T-cell (primary cell): ENCODE measurements at regions of chr15 and their contacts with region 1.

Region 1: GRCh38 chr15:31365655-31366127 is 39.1 kb downstream of the KLF13 start:
- DNase-seq: peak; percentile 58 to 94 (median 79)
- ATAC-seq: peak; percentile 52 to 57 (median 54)
- H3K4me3 ChIP-seq: peak overlapping the region in 1 of 2 donors; percentile 25
- H3K4me3 Mint-ChIP-seq: peak overlapping the region; percentile 59 to 94 (median 74)
- H3K27ac ChIP-seq: peak overlapping the region; percentile 99
- H3K27ac Mint-ChIP-seq: peak overlapping the region; percentile 96
- H3K4me1 ChIP-seq: peaks cover 68 to 98% of the 10 kb centered on the region in 2 experiments
- H3K4me1 Mint-ChIP-seq: peaks cover 97 to 100% (median 99%) of the 10 kb centered on the region in 3 donors
- H3K27me3 ChIP-seq: no peaks in the 10 kb centered on the region
- H3K27me3 Mint-ChIP-seq: no peaks in the 10 kb centered on the region

Region 2: DNA sequence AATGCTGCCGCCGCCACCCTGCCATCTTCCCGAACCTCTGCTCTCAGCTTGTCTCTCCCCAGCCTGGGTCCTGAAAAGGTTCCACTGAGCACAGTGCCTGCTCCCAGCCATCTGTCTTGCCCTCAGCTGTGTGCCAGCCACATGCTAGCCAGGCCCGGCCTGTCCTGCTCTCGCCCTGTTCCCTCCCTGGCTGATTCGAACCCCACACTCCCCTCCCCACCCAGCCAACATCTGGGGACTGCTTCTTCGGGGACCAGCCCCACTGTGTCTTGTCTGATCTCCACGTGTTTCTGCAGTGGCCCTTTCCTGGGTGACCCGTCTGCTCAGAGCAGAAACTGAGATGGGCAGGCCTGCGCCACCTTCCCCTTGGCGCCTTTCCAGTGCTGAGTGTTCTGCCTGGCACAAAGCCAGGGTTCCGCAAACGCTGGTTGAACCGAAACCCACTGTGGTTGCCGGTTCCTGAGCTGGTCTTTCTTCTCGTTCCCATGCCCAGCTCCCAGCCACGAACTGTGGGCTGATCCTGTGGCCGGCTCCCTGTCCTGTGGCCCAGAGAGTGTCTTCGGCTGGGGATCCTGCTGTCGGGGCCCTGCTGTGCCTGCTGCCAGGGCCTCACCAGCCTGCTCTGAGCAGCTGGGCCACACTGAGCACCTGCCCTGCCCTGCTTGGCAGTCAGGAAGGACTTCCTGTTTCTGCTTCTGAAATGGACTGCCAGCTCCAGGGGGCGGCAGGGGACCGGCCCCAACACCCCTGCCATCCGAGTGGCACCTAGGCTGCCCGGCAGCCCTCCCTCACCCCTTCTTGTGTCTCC is 101.7 kb before region 1 on chr15:
- CTCF ChIA-PET with region 1: interaction called in 1 of 2 experiments, 5 read pairs
- POLR2A ChIA-PET with region 1: interaction called, 3 to 12 read pairs
- DNase-seq: peak; percentile 42 to 87 (median 67)
- ATAC-seq: peak; percentile 56 to 71 (median 67)
- H3K4me3 ChIP-seq: no peak overlapping the region
- H3K4me3 Mint-ChIP-seq: peak overlapping the region; percentile 59 to 75 (median 63)
- H3K27ac ChIP-seq: peak overlapping the region; percentile 80
- H3K27ac Mint-ChIP-seq: peak overlapping the region; percentile 96 to 97
- H3K4me1 ChIP-seq: peaks cover 64 to 80% of the 10 kb centered on the region in 2 experiments
- H3K4me1 Mint-ChIP-seq: peaks cover 80 to 95% (median 85%) of the 10 kb centered on the region in 3 donors
- H3K27me3 ChIP-seq: no peaks in the 10 kb centered on the region
- H3K27me3 Mint-ChIP-seq: no peaks in the 10 kb centered on the region

Region 3: DNA sequence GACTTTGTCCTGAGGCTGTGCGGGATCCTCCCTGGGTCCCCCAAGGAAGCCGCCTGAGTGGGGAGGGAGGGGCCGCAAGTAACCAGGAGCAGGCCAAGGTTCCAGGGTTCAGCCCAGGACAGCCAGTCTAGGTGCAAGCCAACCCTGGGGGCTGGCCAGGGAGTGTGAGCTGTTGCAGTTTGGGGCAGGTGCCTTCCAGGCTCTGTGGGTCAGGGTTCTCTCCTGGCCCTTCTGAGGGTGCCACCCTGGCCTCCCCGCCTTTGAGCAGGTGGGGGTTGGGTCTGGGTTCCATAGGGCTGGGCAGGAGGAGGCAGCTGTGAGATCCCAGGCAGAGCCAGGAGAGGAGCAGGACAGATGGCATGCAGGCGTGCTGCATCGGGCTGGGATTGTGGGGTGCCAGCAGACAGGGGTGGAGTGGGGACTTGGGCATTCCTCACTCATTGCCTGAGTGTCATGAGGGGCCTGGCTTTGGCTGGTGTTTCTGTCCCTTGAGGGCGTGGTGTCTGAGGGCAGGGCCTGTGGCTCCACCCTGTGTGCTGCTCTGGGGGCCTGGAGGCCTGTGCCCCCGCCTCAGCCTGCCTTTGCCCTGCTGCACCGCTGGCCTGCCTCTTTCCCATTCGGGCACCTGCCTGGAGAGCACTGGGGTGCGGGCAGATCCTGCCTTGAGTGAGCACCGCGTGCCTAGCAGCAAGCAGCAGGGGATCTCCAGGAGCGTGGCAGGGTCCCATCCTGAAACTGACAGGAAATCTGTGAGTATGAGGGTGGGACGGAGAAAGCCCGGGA is 20.7 kb before region 1 on chr15:
- CTCF ChIA-PET with region 1: interaction called, 3 to 21 read pairs
- POLR2A ChIA-PET with region 1: interaction called in 1 of 2 experiments, 7 read pairs
- DNase-seq: peak in 1 of 35 experiments; percentile 55
- ATAC-seq: peak in 1 of 4 experiments; percentile 6
- H3K4me3 ChIP-seq: peak overlapping the region; percentile 33 to 43
- H3K4me3 Mint-ChIP-seq: peak overlapping the region; percentile 81 to 94 (median 86)
- H3K27ac ChIP-seq: peak overlapping the region; percentile 99
- H3K27ac Mint-ChIP-seq: peak overlapping the region; percentile 96 to 98
- H3K4me1 ChIP-seq: peaks cover 93 to 100% of the 10 kb centered on the region in 2 experiments
- H3K4me1 Mint-ChIP-seq: peaks cover 98 to 100% (median 100%) of the 10 kb centered on the region in 3 donors
- H3K27me3 ChIP-seq: no peaks in the 10 kb centered on the region
- H3K27me3 Mint-ChIP-seq: no peaks in the 10 kb centered on the region

Region 4: DNA sequence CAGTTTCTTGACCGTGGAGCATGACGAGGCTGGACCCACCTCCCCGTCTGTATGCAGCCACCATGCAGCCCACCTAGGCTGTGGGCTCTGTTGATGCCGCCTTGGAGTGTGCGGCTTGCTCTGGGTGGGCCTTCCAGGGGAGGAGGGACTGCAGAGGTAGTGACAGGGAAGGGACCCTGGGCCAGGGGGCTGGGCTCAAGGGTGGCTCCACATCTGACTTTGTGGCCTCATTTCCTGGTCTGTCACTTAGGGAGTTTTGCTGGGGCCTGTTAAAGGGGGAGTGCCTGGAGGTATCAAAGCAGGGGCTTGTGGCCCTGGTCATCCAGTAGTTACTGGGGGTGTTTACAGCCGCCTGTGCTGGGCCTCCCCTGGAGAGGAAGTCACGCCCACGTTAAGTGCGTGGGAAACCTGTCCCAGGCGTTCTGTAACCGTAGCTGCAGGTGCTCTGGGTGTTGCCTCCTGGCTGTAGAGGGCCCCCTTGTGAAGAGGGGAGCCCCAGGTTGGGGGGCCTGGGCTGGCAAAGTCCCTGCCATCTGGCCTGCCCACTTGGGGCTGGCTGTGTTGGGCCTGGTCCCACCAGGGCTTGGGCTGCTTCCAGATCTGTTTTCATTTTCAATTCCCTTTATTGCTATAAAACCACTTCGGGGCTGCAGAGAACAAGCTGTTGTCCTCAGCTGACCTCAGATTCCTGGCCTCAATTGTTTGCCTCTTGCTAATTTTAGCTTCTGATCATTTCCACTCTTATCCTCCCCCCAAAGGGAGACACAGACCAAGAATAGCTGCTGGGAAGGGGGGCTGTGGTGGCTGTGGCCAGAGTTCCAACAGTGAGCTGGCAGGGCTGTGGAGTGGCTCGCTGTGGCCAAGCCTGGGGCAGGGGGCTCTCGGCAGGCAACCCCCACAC is 12.5 kb before region 1 on chr15:
- CTCF ChIA-PET with region 1: interaction called, 4 to 21 read pairs
- POLR2A ChIA-PET with region 1: interaction called in 1 of 2 experiments, 7 read pairs
- DNase-seq: peak in 31 of 35 experiments; percentile 31 to 76 (median 51)
- ATAC-seq: peak; percentile 50 to 69 (median 58)
- H3K4me3 ChIP-seq: peak overlapping the region; percentile 18 to 61
- H3K4me3 Mint-ChIP-seq: peak overlapping the region; percentile 62 to 94 (median 76)
- H3K27ac ChIP-seq: peak overlapping the region; percentile 99
- H3K27ac Mint-ChIP-seq: peak overlapping the region; percentile 96 to 98
- H3K4me1 ChIP-seq: peaks cover 89 to 100% of the 10 kb centered on the region in 2 experiments
- H3K4me1 Mint-ChIP-seq: peaks cover 96 to 100% (median 100%) of the 10 kb centered on the region in 3 donors
- H3K27me3 ChIP-seq: no peaks in the 10 kb centered on the region
- H3K27me3 Mint-ChIP-seq: no peaks in the 10 kb centered on the region

Region 5: GRCh38 chr15:31391687-31392671 is 26.3 kb after region 1 on chr15:
- CTCF ChIA-PET with region 1: interaction called, 6 to 12 read pairs
- POLR2A ChIA-PET with region 1: interaction called, 3 to 9 read pairs
- DNase-seq: peak; percentile 45 to 89 (median 71)
- ATAC-seq: peak; percentile 82 to 85 (median 84)
- H3K4me3 ChIP-seq: peak overlapping the region; percentile 61 to 83
- H3K4me3 Mint-ChIP-seq: peak overlapping the region; percentile 84 to 93 (median 85)
- H3K27ac ChIP-seq: peak overlapping the region; percentile 72
- H3K27ac Mint-ChIP-seq: peak overlapping the region; percentile 96
- H3K4me1 ChIP-seq: peaks cover 16 to 53% of the 10 kb centered on the region in 2 experiments
- H3K4me1 Mint-ChIP-seq: peaks cover 46 to 54% (median 48%) of the 10 kb centered on the region in 3 donors
- H3K27me3 ChIP-seq: no peaks in the 10 kb centered on the region
- H3K27me3 Mint-ChIP-seq: no peaks in the 10 kb centered on the region

Region 6: GRCh38 chr15:31435261-31435911 is 69.7 kb after region 1 on chr15:
- CTCF ChIA-PET with region 1: interaction called, 12 to 18 read pairs
- POLR2A ChIA-PET with region 1: interaction called in 1 of 2 experiments, 4 read pairs
- DNase-seq: peak in 34 of 35 experiments; percentile 70 to 94 (median 87)
- ATAC-seq: peak; percentile 67 to 80 (median 72)
- H3K4me3 ChIP-seq: peak overlapping the region; percentile 41 to 55
- H3K4me3 Mint-ChIP-seq: peak overlapping the region; percentile 77 to 86 (median 78)
- H3K27ac ChIP-seq: peak overlapping the region; percentile 92
- H3K27ac Mint-ChIP-seq: peak overlapping the region; percentile 98
- H3K4me1 ChIP-seq: peaks cover 32 to 76% of the 10 kb centered on the region in 2 experiments
- H3K4me1 Mint-ChIP-seq: peaks cover 80 to 87% (median 81%) of the 10 kb centered on the region in 3 donors
- H3K27me3 ChIP-seq: no peaks in the 10 kb centered on the region
- H3K27me3 Mint-ChIP-seq: no peaks in the 10 kb centered on the region

Region 7: GRCh38 chr15:31488426-31489204 is 122.9 kb after region 1 on chr15:
- CTCF ChIA-PET with region 1: interaction called, 10 to 42 read pairs
- POLR2A ChIA-PET with region 1: no interaction called
- DNase-seq: peak in 20 of 35 experiments; percentile 19 to 89 (median 30)
- ATAC-seq: peak; percentile 31 to 59 (median 35)
- H3K4me3 ChIP-seq: no peak overlapping the region
- H3K4me3 Mint-ChIP-seq: no peak overlapping the region
- H3K27ac ChIP-seq: no peak overlapping the region
- H3K27ac Mint-ChIP-seq: peak overlapping the region; percentile 28 to 32
- H3K4me1 ChIP-seq: peaks cover 7 to 35% of the 10 kb centered on the region in 2 experiments
- H3K4me1 Mint-ChIP-seq: peaks cover 23 to 47% (median 37%) of the 10 kb centered on the region in 3 donors
- H3K27me3 ChIP-seq: peaks cover 0 to 6% of the 10 kb centered on the region in 2 experiments
- H3K27me3 Mint-ChIP-seq: peaks cover 0 to 5% of the 10 kb centered on the region in 2 donors